ENCODE measurements at regions of chrX and their contacts with region 1.

Region 1: DNA sequence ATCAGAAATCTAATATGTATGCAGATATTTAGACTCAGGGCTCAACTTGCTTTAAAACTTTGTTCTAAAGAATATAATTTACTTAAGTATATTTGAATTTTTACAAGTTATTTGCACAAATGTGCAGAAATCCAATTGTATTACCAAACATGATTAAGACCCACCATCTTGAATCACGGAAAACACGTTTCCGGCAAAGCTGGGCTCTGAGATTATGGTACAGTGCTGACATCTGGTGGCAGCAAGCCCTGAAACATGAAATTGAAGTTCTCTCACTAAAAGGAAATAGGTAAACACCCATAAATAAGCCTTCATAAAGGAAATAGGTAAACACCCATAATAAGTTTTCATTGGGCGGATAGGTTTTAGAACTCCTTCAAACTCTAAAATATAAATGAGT is 98.3 kb upstream of the MAOA start:
- DNase-seq: peak; percentile 39
- H3K4me3 ChIP-seq: no peak overlapping the region
- H3K27ac ChIP-seq: no peak overlapping the region
- H3K4me1 ChIP-seq: no peaks in the 10 kb centered on the region
- H3K27me3 ChIP-seq: peaks cover 3% of the 10 kb centered on the region; the same call in 1 of the 2 replicates
- CTCF ChIP-seq: peak; percentile 78
- EP300 ChIP-seq: no peak
- RAD21 ChIP-seq: peak; percentile 87

Region 2: DNA sequence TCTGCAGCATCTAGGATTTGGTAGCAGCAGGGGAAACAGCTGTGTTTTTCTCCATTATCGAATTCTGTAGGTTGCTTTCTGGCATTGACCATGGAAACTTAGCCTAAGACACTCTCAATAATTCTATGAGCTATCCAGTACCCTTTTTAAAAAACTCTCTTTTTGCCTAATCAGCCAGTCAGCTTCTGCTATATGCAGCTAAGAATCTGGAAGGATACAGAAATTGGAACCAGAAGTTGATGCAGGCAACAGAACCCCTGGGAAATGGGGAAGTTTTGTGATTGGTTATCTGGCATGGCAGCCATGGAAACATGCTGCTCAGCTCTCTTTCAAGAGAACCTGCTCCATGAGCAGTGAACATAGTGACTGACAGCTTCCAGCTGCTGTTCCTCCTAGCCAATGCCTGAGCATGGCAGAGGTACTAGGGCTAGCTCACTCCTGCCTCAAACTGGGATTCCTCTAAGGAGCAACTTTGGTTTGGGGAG is 319.3 kb before region 1 on chrX:
- CTCF ChIA-PET with region 1: no interaction called
- POLR2A ChIA-PET with region 1: no interaction called
- DNase-seq: no peak
- H3K4me3 ChIP-seq: no peak overlapping the region
- H3K27ac ChIP-seq: no peak overlapping the region
- H3K4me1 ChIP-seq: no peaks in the 10 kb centered on the region
- H3K27me3 ChIP-seq: no peaks in the 10 kb centered on the region
- CTCF ChIP-seq: no peak
- EP300 ChIP-seq: no peak
- RAD21 ChIP-seq: no peak

Region 3: DNA sequence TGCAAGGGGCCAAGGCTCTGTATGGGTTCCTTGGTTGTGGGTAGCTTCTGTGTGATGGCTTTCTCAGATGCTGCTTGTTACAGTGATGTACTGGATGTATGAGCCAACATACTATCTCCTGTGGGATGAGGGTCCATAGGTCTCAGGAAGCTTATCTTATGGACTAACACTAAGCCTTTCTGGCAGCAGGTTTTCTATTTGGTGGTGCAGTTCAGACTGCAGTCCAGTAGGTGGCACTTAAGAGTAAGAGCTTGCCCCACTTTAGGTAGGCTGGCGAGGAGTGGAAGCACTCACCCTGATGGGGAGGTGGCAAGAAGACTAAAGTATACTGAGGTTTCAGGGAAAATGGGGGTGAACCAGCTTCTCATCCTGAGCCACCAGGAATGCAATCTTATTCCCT is 208.4 kb before region 1 on chrX:
- CTCF ChIA-PET with region 1: interaction called, 22 read pairs
- POLR2A ChIA-PET with region 1: no interaction called
- DNase-seq: peak; percentile 25
- H3K4me3 ChIP-seq: no peak overlapping the region
- H3K27ac ChIP-seq: no peak overlapping the region
- H3K4me1 ChIP-seq: no peaks in the 10 kb centered on the region
- H3K27me3 ChIP-seq: no peaks in the 10 kb centered on the region
- CTCF ChIP-seq: peak; percentile 64
- EP300 ChIP-seq: no peak
- RAD21 ChIP-seq: peak; percentile 62

Region 4: DNA sequence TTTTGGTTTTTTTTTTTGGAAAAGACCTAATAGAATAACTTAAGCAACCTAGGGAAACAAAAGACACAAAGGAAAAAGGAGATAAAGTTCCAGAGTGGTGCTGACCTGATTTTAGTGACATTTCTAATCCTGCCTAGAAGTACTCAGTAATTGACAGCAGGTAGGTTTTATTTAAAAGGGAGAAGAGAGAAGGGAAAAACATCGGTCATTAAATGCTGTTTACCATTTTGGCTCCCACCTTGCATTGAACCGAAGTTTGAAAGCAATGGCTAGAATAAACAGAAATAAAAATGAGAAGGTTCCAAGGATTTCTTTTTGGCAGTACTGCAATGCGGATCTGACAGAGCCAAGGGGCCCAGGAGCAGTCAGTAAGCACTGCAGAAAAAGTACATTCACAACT is 17.5 kb before region 1 on chrX:
- CTCF ChIA-PET with region 1: no interaction called
- POLR2A ChIA-PET with region 1: no interaction called
- DNase-seq: no peak
- H3K4me3 ChIP-seq: no peak overlapping the region
- H3K27ac ChIP-seq: no peak overlapping the region
- H3K4me1 ChIP-seq: no peaks in the 10 kb centered on the region
- H3K27me3 ChIP-seq: no peaks in the 10 kb centered on the region; the same call in 1 of the 2 replicates
- CTCF ChIP-seq: no peak
- EP300 ChIP-seq: no peak
- RAD21 ChIP-seq: no peak

Region 5: GRCh38 chrX:43703211-43703791 is 145.5 kb after region 1 on chrX:
- CTCF ChIA-PET with region 1: no interaction called
- POLR2A ChIA-PET with region 1: no interaction called
- DNase-seq: no peak
- H3K4me3 ChIP-seq: no peak overlapping the region
- H3K27ac ChIP-seq: 0 out of 4 replicates have a peak overlapping the region, but pooled peaks have one; percentile 3 to 16
- H3K4me1 ChIP-seq: peaks cover 0 to 3% of the 10 kb centered on the region in 2 experiments; a peak in 1 of 4 replicates
- H3K27me3 ChIP-seq: no peaks in the 10 kb centered on the region
- CTCF ChIP-seq: no peak
- EP300 ChIP-seq: no peak
- RAD21 ChIP-seq: no peak